ENCODE measurements at regions of chr2 and their contacts with region 1.

Region 1: GRCh38 chr2:171124541-171124940 is 36.2 kb downstream of the TLK1 start:
- DNase-seq: no peak

Region 2: GRCh38 chr2:171042253-171042969 is 82.1 kb before region 1 on chr2:
- intact Hi-C with region 1: loop called in 1 of 2 experiments (anchors 2 kb)
- DNase-seq: no peak